Head of caudate nucleus (tissue), 42 donors: ENCODE measurements at regions of chr11 and their contacts with region 1.

Region 1: DNA sequence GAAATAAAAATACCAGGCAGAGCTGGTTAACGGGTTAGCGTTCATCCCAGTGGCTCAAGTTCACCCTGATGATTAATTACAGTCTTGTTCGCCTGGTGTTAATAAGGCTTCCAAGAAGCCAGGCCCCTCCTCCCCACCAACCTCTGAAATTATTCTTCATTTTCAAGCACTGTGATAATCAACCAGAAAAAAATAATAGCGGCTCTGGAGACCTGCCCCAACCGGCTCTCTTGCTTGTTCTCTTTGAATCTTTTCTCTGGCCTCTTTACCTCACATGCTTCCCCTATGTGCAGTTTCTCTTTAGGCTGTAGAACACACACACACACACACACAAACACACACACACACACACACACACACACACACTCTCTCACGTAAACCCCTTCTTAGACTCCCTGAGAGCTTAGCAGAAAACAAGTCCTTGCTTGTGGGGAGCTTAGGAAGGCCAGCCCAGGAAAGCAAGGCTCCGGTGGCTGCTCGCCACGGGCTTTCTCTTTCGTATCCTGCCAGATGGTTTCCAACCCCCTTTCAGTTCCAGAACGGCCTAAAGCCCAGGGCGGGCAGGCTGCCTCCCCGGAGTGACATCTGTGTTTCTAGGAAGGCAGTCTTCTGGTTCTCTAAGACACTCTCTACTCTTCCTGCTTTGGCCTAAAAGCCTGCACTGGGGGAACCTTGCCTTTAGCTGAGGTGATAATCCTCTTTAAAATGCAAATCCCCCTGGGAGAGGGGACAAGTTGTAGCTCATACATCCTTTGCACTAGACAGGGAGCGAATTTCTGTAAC is 106.4 kb upstream of the SESN3 start:
- DNase-seq: peak; percentile 19 to 82 (median 58)

Region 2: DNA sequence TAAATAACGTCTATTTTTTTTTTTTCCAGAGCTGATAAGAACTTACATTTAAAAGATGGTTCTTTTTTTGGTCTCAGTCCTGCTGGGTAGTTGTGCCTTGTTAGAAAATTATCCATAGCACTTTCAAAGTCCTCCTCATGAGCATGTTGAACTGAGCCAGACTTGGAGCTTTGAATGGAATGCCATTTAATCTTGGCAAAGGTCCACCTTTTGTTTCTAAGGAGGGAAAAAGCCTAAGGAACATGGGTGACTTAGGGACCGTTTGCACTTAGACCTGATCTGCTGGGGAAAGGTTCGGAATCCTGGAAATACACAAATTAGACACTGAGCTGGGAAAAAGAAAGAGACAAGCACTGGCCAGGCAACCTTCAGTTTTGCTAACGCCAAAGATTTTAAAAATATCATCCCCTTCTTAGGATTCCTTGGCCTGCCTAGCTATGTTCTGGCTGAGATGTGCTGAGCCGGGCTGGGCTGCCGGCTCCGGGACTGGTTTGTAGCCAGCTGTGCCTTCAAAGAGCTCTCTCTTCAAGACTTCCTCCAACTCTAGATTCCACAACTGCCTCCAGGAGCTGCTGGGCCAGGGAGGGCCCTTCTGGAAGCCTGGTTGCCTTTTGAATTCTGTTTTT is 180.3 kb before region 1 on chr11:
- intact Hi-C with region 1: loop called (anchors 5 kb)
- DNase-seq: peak in 1 of 42 donors; percentile 4

Region 3: GRCh38 chr11:95254131-95254704 is 83.1 kb before region 1 on chr11:
- intact Hi-C with region 1: loop called (anchors 10 kb)
- DNase-seq: peak; percentile 68 to 96 (median 88)